Body of pancreas (tissue), 4 donors: ENCODE measurements at regions of chr7 and their contacts with region 1.

Region 1: GRCh38 chr7:97027427-97028234 is 3.0 kb upstream of the DLX5 start:
- DNase-seq: peak; percentile 76 to 81 (median 80)
- ATAC-seq: peak; percentile 85
- H3K4me3 ChIP-seq: peak overlapping the region in 1 of 2 donors; percentile 9
- H3K27ac ChIP-seq: no peak overlapping the region
- H3K4me1 ChIP-seq: peaks cover 31% of the 10 kb centered on the region
- H3K27me3 ChIP-seq: peaks cover 0 to 17% of the 10 kb centered on the region in 2 donors
- CTCF ChIP-seq: peak; percentile 68 to 92 (median 82)
- POLR2A ChIP-seq: no peak

Region 2: DNA sequence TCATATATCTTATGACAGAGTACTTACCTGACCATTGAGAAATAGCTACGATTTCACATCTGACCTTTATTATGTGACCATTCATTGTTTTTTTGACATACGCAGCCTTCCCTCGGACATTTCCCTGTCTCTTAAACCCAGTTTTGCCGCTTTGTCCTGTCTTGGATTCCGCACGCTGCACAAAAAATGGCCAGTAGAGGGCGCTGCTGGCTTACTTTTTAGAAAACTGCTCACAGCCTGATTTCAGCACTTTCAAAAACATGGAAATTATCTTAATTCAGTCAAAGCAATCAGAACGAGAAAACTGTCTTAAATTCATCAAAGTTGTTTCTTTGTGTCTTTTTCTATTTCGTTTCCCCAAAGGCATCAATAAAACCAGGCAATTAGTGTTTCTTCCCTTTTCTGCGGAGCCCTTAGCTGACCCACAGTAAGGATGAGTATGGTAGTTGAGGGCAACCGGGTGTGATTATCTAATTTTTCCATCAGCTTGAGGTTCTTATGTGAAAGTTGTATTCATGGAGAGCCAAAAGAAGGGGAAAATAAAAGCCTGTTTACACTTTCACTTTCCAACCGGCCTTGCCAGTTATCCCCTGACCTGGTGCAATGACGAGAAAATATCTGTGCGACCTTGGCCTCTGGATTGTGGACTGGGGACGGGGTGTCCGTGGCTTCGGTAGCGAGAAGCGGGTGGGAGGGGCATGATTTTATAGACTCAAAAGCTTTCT is 1110.9 kb before region 1 on chr7:
- intact Hi-C with region 1: loop called (anchors 5 kb)
- DNase-seq: peak; percentile 79 to 90 (median 84)
- ATAC-seq: peak; percentile 67
- H3K4me3 ChIP-seq: no peak overlapping the region
- H3K27ac ChIP-seq: no peak overlapping the region
- H3K4me1 ChIP-seq: peaks cover 7% of the 10 kb centered on the region
- H3K27me3 ChIP-seq: no peaks in the 10 kb centered on the region
- CTCF ChIP-seq: peak; percentile 65 to 95 (median 82)
- POLR2A ChIP-seq: no peak

Region 3: GRCh38 chr7:96075510-96076349 is 951.9 kb before region 1 on chr7:
- intact Hi-C with region 1: loop called (anchors 10 kb)
- DNase-seq: peak; percentile 49 to 66 (median 61)
- ATAC-seq: peak; percentile 77
- H3K4me3 ChIP-seq: peak overlapping the region in 1 of 2 donors; percentile 26
- H3K27ac ChIP-seq: no peak overlapping the region
- H3K4me1 ChIP-seq: peaks cover 8% of the 10 kb centered on the region
- H3K27me3 ChIP-seq: peaks cover 0 to 11% of the 10 kb centered on the region in 2 donors
- CTCF ChIP-seq: peak; percentile 57 to 74 (median 64)
- POLR2A ChIP-seq: no peak

Region 4: GRCh38 chr7:96388620-96389383 is 638.8 kb before region 1 on chr7:
- intact Hi-C with region 1: no loop called
- DNase-seq: no peak
- ATAC-seq: peak; percentile 64
- H3K4me3 ChIP-seq: no peak overlapping the region
- H3K27ac ChIP-seq: no peak overlapping the region
- H3K4me1 ChIP-seq: no peaks in the 10 kb centered on the region
- H3K27me3 ChIP-seq: no peaks in the 10 kb centered on the region
- CTCF ChIP-seq: no peak
- POLR2A ChIP-seq: no peak